Activated naive CD4-positive, alpha-beta T cell treated with anti-CD3 and anti-CD28 coated beads, Interleukin-2, amount 10 ng/mL, durations not matched to agents 7 days and 5 days (primary cell): ENCODE measurements at regions of chr11 and their contacts with region 1.

Region 1: DNA sequence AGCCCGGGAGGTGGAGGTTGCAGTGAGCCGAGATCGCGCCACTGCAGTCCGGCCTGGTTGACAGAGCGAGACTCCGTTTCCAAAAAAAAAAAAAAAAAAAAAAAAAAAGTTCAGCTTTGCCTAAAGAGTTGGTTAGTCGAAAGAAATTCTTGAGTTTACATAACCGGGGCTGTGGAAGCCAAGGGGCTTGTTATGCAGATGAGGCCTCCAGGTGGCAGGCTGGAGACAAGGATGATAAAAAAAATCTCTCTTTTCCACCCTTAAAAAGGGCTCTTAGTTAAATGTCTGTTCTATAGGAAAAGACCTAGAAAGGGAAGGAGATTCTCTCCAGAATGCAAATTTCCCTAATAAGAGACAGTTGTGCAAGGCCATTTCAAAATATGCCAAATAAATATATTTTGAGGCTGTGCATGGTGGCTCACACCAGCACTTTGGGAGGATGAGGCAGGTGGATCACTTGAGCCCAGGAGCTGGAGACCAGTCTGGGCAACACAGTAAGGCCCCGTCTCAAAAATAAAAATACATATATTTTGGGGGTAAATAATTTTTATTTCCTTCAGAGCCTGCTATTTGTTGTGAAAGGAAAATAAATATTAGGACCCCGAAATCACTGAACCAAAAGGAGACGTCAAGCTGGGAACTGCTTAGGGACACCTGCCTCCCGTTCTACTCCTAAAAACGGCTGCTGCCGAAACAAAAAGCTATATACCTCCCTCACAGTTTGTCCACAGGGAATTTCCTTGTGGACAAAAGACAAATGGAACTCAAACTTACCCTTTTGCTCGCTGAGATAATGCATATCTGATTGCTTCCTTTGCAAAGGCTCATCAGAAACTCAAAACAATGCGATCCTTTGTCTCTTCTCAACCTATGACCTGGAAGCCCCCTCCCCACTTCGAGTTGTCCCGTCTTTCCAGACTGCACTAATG is 2.4 kb upstream of the IFITM2 start:
- DNase-seq: peak; percentile 82
- H3K4me3 Mint-ChIP-seq: no peak overlapping the region
- H3K27ac Mint-ChIP-seq: no peak overlapping the region
- H3K4me1 Mint-ChIP-seq: peaks cover 52% of the 10 kb centered on the region
- H3K27me3 Mint-ChIP-seq: peaks cover 32% of the 10 kb centered on the region

Region 2: DNA sequence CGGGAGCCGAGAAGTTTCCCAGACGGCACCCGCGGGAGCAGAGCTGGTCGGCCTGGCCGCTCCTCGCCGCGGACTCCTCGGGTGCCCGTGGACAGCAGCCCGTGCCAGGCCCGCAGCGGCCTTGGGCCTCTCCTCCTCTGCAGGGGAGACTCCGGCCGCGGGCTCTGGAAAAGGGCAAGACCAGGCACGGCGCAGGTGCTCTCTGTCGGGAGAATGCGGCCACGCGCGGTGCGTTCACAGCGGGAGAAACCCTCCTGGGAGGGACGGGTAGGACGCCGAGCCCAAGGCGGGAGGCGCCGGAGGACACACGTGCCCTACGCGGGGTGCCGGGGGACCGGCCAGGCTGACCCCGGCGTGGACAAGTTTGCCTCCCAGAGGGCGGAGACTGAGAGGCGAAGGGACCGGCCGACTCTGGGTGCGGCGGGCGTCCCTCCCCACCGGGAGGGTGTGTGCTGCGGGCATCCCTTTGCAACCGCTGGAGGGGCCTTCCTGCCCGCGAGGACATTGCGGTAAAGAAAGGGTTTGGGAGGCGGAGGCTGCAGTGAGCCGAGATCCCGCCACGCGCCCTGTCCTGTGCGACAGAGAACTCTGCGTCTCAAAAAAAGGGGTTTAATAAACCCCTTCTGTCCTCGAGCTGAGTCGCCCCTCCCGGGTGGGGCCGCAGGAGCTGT is 11.0 kb after region 1 on chr11:
- CTCF ChIA-PET with region 1: interaction called, 15 read pairs
- DNase-seq: peak; percentile 65
- H3K4me3 Mint-ChIP-seq: peak overlapping the region; percentile 83
- H3K27ac Mint-ChIP-seq: peak overlapping the region; percentile 97
- H3K4me1 Mint-ChIP-seq: peaks cover 40% of the 10 kb centered on the region
- H3K27me3 Mint-ChIP-seq: peaks cover 12% of the 10 kb centered on the region

Region 3: DNA sequence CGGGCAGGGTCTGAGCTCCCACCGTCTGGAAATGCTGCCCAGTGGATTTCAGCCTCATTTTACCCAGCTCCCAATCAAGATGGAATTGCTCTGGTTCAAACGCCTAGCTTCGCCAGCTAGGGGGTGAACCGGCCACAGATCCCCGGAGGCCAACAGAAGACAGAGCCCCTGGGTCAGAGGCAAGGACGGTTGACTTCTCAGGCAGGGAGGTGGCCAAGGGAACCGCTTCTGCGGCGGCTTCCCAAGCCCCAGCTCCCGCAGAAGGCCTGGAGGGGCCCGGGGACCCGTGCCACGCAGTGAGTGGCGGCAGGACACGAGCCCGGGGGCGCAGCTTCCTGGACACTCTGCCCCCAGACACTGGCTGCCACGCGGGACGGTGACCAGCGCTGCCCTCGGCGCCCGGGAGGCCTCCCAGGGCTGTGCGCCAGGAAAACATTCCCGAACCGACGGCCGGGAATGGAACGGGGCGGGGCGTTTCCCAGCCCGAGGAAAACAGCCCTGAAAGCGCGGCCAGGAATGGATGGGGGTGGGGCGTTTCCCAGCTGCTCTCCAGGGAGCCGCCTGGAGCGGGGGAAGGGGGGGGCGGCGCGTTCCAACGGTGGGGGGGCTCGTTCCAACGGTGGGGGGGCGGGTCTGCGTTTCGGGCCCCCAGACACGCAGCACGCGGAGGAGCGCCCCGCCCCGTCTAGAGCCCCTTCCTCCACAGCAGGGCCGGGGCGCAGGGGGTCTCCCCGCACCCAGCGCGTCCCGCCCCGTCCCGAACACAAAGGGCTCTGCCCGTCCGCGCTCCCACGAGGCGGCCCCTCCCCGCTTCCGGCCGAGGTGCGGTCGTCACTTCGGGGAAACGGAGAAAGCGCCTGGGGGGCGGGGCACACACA is 50.6 kb after region 1 on chr11:
- CTCF ChIA-PET with region 1: interaction called, 43 read pairs
- DNase-seq: peak; percentile 93
- H3K4me3 Mint-ChIP-seq: peak overlapping the region; percentile 80
- H3K27ac Mint-ChIP-seq: peak overlapping the region; percentile 94
- H3K4me1 Mint-ChIP-seq: peaks cover 41% of the 10 kb centered on the region
- H3K27me3 Mint-ChIP-seq: peaks cover 36% of the 10 kb centered on the region

Region 4: GRCh38 chr11:363948-364761 is 59.0 kb after region 1 on chr11:
- CTCF ChIA-PET with region 1: interaction called, 43 read pairs
- DNase-seq: peak; percentile 68
- H3K4me3 Mint-ChIP-seq: no peak overlapping the region
- H3K27ac Mint-ChIP-seq: no peak overlapping the region
- H3K4me1 Mint-ChIP-seq: peaks cover 8% of the 10 kb centered on the region
- H3K27me3 Mint-ChIP-seq: peaks cover 69% of the 10 kb centered on the region

Region 5: DNA sequence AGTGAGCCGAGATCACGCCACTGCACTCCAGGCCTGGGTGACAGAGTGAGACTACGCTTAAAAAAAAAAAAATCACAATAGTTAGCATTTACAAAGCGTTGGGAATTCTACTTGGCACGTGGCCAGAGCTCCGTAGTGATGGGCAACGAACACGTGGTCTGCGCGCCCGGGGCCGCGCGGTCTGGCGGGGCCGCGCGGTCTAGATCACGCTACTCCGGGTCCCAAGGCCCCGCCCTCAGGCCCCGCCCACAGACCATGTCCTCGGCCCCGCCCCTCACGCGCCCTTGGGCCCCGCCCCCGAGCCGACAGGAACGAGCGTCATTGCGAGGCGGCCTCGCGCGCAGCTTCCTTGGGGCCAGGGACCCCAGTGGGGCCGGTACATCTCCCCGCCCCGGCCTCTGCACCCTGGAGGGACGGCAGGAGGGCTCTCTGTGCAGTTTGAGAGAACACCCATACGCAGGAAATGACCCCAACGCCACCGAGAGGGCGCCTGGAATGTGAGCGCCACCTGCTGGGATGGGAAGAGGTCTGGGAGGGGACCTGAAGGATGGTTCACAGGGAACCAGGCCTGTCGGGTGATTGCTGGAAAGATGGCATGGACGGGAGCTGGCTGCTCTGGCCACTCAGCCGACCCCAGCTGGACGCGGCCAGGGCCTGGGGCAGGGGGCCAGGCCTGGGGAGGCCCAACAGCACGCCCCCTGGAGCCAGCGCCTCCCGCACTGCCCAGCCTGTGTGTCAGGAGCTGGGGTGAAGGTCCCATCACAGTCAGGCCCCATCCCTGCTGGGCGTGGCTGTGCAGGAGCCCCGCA is 142.9 kb after region 1 on chr11:
- CTCF ChIA-PET with region 1: interaction called, 26 read pairs
- DNase-seq: peak; percentile 97
- H3K4me3 Mint-ChIP-seq: peak overlapping the region; percentile 88
- H3K27ac Mint-ChIP-seq: peak overlapping the region; percentile 96
- H3K4me1 Mint-ChIP-seq: peaks cover 28% of the 10 kb centered on the region
- H3K27me3 Mint-ChIP-seq: peaks cover 32% of the 10 kb centered on the region